WTC11 (cell line): ENCODE measurements at regions of chr4 and their contacts with region 1.

Region 1: DNA sequence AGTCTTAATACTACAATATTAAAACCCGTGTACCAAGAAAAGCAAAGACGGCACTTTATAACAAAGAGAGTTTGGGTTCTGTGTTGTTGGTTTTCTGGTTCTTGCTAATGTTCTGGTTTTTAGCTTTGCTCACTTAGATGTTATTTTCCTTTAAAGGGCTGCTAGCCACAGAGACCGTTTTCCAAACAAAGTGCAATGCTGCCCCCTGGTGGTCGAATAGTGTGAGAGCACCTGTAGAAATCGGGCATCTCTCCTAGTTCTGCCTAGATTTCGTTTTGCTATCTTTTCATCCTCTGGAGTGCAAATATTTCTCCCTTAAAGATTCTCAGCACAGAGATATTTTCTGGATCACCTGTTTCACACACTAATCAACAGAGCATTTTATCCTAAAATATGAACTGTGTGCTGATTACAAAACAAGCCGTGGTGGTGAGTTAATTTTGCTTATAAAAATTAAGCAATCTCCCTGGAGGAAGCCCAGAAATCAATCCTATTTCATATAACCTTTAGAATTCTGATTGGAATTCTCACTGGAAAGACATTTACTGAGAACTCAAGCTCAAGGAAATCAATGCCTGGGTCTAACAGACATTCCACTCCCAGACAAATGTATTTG is 334.5 kb upstream of the NOCT start:
- DNase-seq: peak; percentile 78
- ATAC-seq: peak; percentile 43
- H3K4me3 Mint-ChIP-seq: no peak overlapping the region
- H3K27ac Mint-ChIP-seq: no peak overlapping the region
- H3K4me1 Mint-ChIP-seq: peaks cover 49% of the 10 kb centered on the region
- H3K27me3 Mint-ChIP-seq: peaks cover 3% of the 10 kb centered on the region; the same call in 1 of the 2 replicates
- CTCF ChIP-seq: peak; percentile 96

Region 2: GRCh38 chr4:137819964-137820383 is 861.1 kb before region 1 on chr4:
- CTCF ChIA-PET with region 1: interaction called, 15 read pairs
- POLR2A ChIA-PET with region 1: no interaction called
- DNase-seq: peak; percentile 20
- ATAC-seq: peak; percentile 99
- H3K4me3 Mint-ChIP-seq: no peak overlapping the region
- H3K27ac Mint-ChIP-seq: no peak overlapping the region
- H3K4me1 Mint-ChIP-seq: peaks cover 3% of the 10 kb centered on the region; the same call in 1 of the 2 replicates
- H3K27me3 Mint-ChIP-seq: no peaks in the 10 kb centered on the region
- CTCF ChIP-seq: no peak

Region 3: GRCh38 chr4:138494931-138495330 is 186.2 kb before region 1 on chr4:
- CTCF ChIA-PET with region 1: interaction called, 10 read pairs
- POLR2A ChIA-PET with region 1: no interaction called
- DNase-seq: peak; percentile 51
- ATAC-seq: peak; percentile 100
- H3K4me3 Mint-ChIP-seq: no peak overlapping the region
- H3K27ac Mint-ChIP-seq: no peak overlapping the region
- H3K4me1 Mint-ChIP-seq: peaks cover 18% of the 10 kb centered on the region
- H3K27me3 Mint-ChIP-seq: no peaks in the 10 kb centered on the region; the same call in 1 of the 2 replicates
- CTCF ChIP-seq: no peak

Region 4: DNA sequence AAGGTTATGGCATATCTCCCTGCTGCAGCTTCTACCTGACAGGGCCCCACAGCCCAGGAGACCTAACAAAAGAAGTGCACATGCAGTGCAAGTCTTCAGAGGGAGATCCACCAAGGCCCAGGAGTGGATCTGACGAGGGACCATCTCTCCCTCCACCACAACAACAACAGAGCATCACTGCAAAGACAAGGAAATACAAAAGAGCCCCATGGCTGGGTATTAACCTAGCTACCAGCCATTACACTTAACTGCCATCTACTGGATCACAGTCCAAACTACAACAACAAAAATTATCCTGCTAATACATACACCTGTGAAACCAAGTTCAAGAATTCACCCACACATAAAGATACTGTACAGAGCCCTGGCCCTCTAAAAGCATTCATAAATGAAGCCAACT is 158.7 kb before region 1 on chr4:
- CTCF ChIA-PET with region 1: interaction called, 11 read pairs
- POLR2A ChIA-PET with region 1: no interaction called
- DNase-seq: no peak
- ATAC-seq: peak; percentile 93
- H3K4me3 Mint-ChIP-seq: no peak overlapping the region
- H3K27ac Mint-ChIP-seq: no peak overlapping the region
- H3K4me1 Mint-ChIP-seq: no peaks in the 10 kb centered on the region
- H3K27me3 Mint-ChIP-seq: no peaks in the 10 kb centered on the region; the same call in 1 of the 2 replicates
- CTCF ChIP-seq: peak; percentile 34; the same call in 1 of the 2 replicates

Region 5: GRCh38 chr4:138555584-138555983 is 125.5 kb before region 1 on chr4:
- CTCF ChIA-PET with region 1: interaction called, 23 read pairs
- POLR2A ChIA-PET with region 1: no interaction called
- DNase-seq: peak; percentile 32
- ATAC-seq: peak; percentile 81
- H3K4me3 Mint-ChIP-seq: no peak overlapping the region
- H3K27ac Mint-ChIP-seq: no peak overlapping the region
- H3K4me1 Mint-ChIP-seq: peaks cover 11% of the 10 kb centered on the region
- H3K27me3 Mint-ChIP-seq: no peaks in the 10 kb centered on the region
- CTCF ChIP-seq: peak; percentile 33; the same call in 1 of the 2 replicates

Region 6: GRCh38 chr4:138576684-138577083 is 104.4 kb before region 1 on chr4:
- CTCF ChIA-PET with region 1: interaction called, 33 read pairs
- POLR2A ChIA-PET with region 1: no interaction called
- DNase-seq: no peak
- ATAC-seq: peak; percentile 93
- H3K4me3 Mint-ChIP-seq: no peak overlapping the region
- H3K27ac Mint-ChIP-seq: no peak overlapping the region
- H3K4me1 Mint-ChIP-seq: peaks cover 21% of the 10 kb centered on the region
- H3K27me3 Mint-ChIP-seq: no peaks in the 10 kb centered on the region
- CTCF ChIP-seq: no peak

Region 7: GRCh38 chr4:138627096-138627495 is 54.0 kb before region 1 on chr4:
- CTCF ChIA-PET with region 1: no interaction called
- POLR2A ChIA-PET with region 1: no interaction called
- DNase-seq: no peak
- ATAC-seq: no peak
- H3K4me3 Mint-ChIP-seq: no peak overlapping the region
- H3K27ac Mint-ChIP-seq: no peak overlapping the region
- H3K4me1 Mint-ChIP-seq: peaks cover 14% of the 10 kb centered on the region
- H3K27me3 Mint-ChIP-seq: peaks cover 2% of the 10 kb centered on the region; the same call in 1 of the 2 replicates
- CTCF ChIP-seq: no peak

Region 8: GRCh38 chr4:138697851-138698250 is 16.8 kb after region 1 on chr4:
- CTCF ChIA-PET with region 1: no interaction called
- POLR2A ChIA-PET with region 1: no interaction called
- DNase-seq: no peak
- ATAC-seq: no peak
- H3K4me3 Mint-ChIP-seq: no peak overlapping the region
- H3K27ac Mint-ChIP-seq: no peak overlapping the region
- H3K4me1 Mint-ChIP-seq: peaks cover 56% of the 10 kb centered on the region
- H3K27me3 Mint-ChIP-seq: peaks cover 8% of the 10 kb centered on the region; the same call in 1 of the 2 replicates
- CTCF ChIP-seq: no peak

Region 9: GRCh38 chr4:138938366-138938690 is 257.2 kb after region 1 on chr4:
- CTCF ChIA-PET with region 1: interaction called, 13 read pairs
- POLR2A ChIA-PET with region 1: no interaction called
- DNase-seq: no peak
- ATAC-seq: peak; percentile 67
- H3K4me3 Mint-ChIP-seq: no peak overlapping the region
- H3K27ac Mint-ChIP-seq: no peak overlapping the region
- H3K4me1 Mint-ChIP-seq: peaks cover 55% of the 10 kb centered on the region
- H3K27me3 Mint-ChIP-seq: no peaks in the 10 kb centered on the region
- CTCF ChIP-seq: no peak